ENCODE measurements at regions of chr6 and their contacts with region 1.

Region 1: DNA sequence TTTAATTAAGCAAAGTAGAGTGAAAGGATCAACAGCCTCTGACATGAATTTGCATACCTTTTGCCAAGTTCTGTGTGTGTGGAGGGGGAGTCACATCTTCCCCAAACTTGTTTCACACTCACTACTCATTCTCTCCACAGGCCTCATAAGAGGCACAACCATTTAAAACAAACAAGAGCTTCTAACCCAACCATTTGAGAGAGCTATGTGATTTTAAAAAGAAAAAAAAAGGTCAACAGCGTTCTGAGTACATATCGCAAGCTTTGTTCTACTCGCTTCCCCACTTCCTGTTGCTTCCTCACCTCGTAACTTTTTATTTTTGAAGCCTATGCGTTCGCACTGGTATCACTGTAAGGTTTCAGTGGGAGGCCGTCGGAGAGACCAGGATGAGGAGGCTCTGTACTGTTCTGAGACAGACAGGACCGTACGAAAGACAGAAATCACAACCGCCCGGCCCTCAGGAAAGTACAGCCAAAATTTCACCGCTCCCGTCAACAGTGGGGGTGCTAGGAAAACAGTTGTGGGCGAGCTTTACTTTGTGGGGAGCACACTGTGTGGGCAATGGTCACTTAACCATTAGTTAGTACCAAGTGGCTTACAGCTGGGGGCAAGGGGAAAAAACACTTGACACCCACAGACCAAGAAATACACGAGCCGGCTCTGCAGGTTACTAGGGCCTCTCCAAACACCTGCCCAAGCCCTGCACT is 61.3 kb downstream of the TRERF1 start:
- DNase-seq: peak; percentile 68
- ATAC-seq: peak; percentile 79
- H3K4me3 Mint-ChIP-seq: peak overlapping the region; percentile 69
- H3K27ac Mint-ChIP-seq: peak overlapping the region; percentile 96
- H3K4me1 Mint-ChIP-seq: peaks cover 85% of the 10 kb centered on the region
- H3K27me3 Mint-ChIP-seq: no peaks in the 10 kb centered on the region

Region 2: DNA sequence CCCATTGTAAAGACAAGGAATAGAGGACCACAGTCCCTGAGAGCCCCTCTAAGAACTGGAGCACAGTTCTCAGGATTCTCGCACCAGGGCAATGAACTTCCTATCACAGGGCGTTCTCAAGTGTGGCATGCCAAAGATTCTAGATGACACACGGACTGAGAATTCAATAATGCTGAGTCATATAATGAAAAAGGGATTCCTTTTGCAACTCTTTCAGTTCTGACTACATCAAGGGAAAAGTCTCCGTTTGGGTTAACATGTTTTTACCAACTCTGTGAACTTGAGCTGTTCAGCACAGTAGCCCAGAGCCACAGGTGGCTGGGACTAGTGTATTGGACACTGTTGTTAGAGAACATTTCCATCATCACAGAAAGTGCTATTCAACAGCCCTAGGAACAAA is 472.9 kb before region 1 on chr6:
- CTCF ChIA-PET with region 1: no interaction called
- POLR2A ChIA-PET with region 1: no interaction called
- DNase-seq: no peak
- ATAC-seq: no peak
- H3K4me3 Mint-ChIP-seq: no peak overlapping the region
- H3K27ac Mint-ChIP-seq: no peak overlapping the region
- H3K4me1 Mint-ChIP-seq: peaks cover 37% of the 10 kb centered on the region
- H3K27me3 Mint-ChIP-seq: no peaks in the 10 kb centered on the region

Region 3: DNA sequence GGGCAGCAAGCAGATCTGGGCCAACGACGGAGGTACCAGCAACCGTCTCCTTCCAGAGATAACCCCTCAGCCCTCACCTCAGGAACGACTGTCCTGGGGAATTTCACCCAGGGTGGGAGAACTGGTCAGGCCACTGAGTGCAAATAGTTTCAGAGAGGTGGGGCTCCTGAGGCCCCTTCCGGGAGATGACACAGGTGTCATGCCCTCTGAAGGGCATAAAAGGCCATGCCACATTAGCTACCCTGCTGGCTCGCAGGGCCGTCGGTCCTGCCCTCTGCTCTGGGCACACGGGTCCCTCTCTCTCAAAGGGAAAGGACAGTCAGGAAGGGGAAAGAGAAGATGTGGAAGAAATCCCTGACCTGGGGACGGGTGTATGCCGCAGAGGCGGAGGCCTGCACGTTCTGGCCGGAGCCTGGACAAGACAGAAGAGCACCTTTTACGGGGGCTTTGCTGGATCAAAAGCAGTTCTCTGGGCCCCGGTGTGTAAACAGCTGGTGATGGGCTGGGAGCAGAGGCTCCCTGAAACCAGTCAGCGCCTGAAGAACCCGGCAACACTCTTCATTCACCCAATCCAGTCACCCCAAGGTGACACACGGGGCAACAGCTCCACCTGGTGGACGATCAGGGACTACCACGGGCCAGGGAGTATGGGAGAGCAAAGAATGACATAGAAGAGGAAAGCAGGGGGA is 346.4 kb before region 1 on chr6:
- CTCF ChIA-PET with region 1: no interaction called
- POLR2A ChIA-PET with region 1: no interaction called
- DNase-seq: peak; percentile 96
- ATAC-seq: peak; percentile 48
- H3K4me3 Mint-ChIP-seq: peak overlapping the region; percentile 75
- H3K27ac Mint-ChIP-seq: peak overlapping the region; percentile 92
- H3K4me1 Mint-ChIP-seq: peaks cover 89% of the 10 kb centered on the region
- H3K27me3 Mint-ChIP-seq: no peaks in the 10 kb centered on the region

Region 4: DNA sequence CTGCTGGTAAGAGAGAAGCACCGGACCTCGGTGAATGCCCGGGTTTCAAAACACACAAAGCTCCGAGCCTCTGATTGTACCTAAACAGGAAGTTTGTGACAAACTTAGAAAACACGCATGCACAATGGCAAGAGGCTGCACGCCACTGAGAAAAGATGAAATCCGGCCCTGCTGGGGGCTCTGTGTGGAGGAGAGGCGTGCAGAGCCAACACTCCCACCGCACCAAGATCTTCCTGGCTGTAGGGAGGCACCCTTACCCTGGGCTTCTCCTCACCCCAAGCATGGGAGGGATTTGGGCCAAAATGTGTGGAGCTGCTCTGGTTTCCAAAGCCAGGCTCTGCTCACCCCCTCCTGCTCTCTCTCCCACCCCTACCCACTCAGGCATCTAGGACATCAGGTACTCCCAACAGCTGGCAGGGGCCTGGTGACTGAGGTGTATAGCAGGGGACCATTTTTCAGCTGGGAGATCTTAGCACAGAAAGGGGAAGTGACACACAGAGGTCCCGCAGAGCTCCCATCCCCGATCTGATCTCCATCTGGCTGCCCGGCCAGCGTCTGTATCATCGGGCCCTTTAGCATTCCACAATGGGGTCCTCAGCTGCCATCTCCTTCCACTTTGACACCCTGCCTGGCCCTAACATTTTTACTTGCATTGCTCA is 22.9 kb before region 1 on chr6:
- CTCF ChIA-PET with region 1: interaction called, 6 read pairs
- POLR2A ChIA-PET with region 1: interaction called, 13 read pairs
- DNase-seq: peak; percentile 48
- ATAC-seq: peak; percentile 59
- H3K4me3 Mint-ChIP-seq: peak overlapping the region; percentile 64
- H3K27ac Mint-ChIP-seq: peak overlapping the region; percentile 90
- H3K4me1 Mint-ChIP-seq: peaks cover 69% of the 10 kb centered on the region
- H3K27me3 Mint-ChIP-seq: no peaks in the 10 kb centered on the region

Region 5: DNA sequence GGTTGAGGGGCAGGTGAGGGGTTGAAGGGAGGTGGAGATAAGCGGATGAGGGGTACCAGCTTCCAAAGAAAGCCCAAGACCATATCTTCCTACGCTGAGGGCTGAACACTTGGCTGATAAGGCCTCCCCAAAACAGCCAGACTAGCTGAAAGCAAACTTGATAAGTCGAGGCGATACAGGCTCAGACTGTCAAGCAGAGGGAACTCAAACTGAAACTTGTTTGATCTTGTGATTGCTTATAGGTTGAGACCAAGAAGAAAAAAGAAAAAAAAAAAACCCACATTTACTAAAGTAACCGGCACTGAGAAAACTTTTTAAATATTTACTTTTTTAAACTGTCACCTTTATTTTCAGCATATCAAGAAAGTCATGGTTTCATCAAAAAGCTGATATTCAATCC is 12.3 kb before region 1 on chr6:
- CTCF ChIA-PET with region 1: interaction called, 25 read pairs
- POLR2A ChIA-PET with region 1: interaction called, 26 read pairs
- DNase-seq: peak; percentile 57
- ATAC-seq: peak; percentile 86
- H3K4me3 Mint-ChIP-seq: peak overlapping the region; percentile 66
- H3K27ac Mint-ChIP-seq: peak overlapping the region; percentile 86
- H3K4me1 Mint-ChIP-seq: peaks cover 63% of the 10 kb centered on the region
- H3K27me3 Mint-ChIP-seq: no peaks in the 10 kb centered on the region

Region 6: GRCh38 chr6:42402184-42402583 is 11.8 kb after region 1 on chr6:
- CTCF ChIA-PET with region 1: interaction called, 52 read pairs
- POLR2A ChIA-PET with region 1: interaction called, 21 read pairs
- DNase-seq: peak; percentile 68
- ATAC-seq: peak; percentile 88
- H3K4me3 Mint-ChIP-seq: no peak overlapping the region
- H3K27ac Mint-ChIP-seq: peak overlapping the region; percentile 47
- H3K4me1 Mint-ChIP-seq: peaks cover 47% of the 10 kb centered on the region
- H3K27me3 Mint-ChIP-seq: no peaks in the 10 kb centered on the region

Region 7: DNA sequence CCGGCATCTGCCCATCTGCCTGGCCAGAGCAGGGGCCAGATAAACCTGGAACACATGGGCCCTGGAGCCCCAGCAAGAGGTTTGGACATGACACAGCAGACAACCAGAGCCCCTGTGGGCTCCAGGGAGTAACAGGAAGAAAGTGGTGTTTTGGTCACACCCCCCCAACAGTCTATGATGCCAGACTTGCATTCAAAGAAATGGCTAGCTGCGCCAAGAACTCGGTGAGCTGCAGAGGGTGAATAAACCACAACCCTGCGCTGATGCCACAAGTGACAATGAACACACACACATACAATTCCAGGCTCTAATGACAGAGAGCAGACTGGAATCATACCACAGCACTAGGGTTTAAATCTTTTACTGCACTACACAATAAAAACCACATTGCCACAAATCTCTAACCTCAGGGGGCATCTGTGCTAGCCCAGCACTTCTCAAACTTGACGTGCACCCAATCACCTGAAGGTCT is 27.3 kb after region 1 on chr6:
- CTCF ChIA-PET with region 1: interaction called, 12 read pairs
- POLR2A ChIA-PET with region 1: interaction called, 6 read pairs
- DNase-seq: peak; percentile 84
- ATAC-seq: peak; percentile 85
- H3K4me3 Mint-ChIP-seq: peak overlapping the region; percentile 55
- H3K27ac Mint-ChIP-seq: peak overlapping the region; percentile 80
- H3K4me1 Mint-ChIP-seq: peaks cover 47% of the 10 kb centered on the region
- H3K27me3 Mint-ChIP-seq: peaks cover 4% of the 10 kb centered on the region

Region 8: GRCh38 chr6:42446370-42446769 is 56.0 kb after region 1 on chr6:
- CTCF ChIA-PET with region 1: interaction called, 11 read pairs
- POLR2A ChIA-PET with region 1: interaction called, 29 read pairs
- DNase-seq: no peak
- ATAC-seq: no peak
- H3K4me3 Mint-ChIP-seq: no peak overlapping the region
- H3K27ac Mint-ChIP-seq: no peak overlapping the region
- H3K4me1 Mint-ChIP-seq: peaks cover 50% of the 10 kb centered on the region
- H3K27me3 Mint-ChIP-seq: no peaks in the 10 kb centered on the region

Region 9: GRCh38 chr6:42453031-42453653 is 62.8 kb after region 1 on chr6:
- CTCF ChIA-PET with region 1: interaction called, 17 read pairs
- POLR2A ChIA-PET with region 1: interaction called, 29 read pairs
- DNase-seq: peak; percentile 84
- ATAC-seq: peak; percentile 79
- H3K4me3 Mint-ChIP-seq: peak overlapping the region; percentile 91
- H3K27ac Mint-ChIP-seq: peak overlapping the region; percentile 30
- H3K4me1 Mint-ChIP-seq: peaks cover 38% of the 10 kb centered on the region
- H3K27me3 Mint-ChIP-seq: peaks cover 13% of the 10 kb centered on the region

Measured in activated CD8-positive, alpha-beta T cell treated with anti-CD3 and anti-CD28 coated beads, Interleukin-2, amount 10 ng/mL, durations not matched to agents 7 days and 5 days (primary cell).